ENCODE measurements at regions of chr16 and their contacts with region 1.

Region 1: DNA sequence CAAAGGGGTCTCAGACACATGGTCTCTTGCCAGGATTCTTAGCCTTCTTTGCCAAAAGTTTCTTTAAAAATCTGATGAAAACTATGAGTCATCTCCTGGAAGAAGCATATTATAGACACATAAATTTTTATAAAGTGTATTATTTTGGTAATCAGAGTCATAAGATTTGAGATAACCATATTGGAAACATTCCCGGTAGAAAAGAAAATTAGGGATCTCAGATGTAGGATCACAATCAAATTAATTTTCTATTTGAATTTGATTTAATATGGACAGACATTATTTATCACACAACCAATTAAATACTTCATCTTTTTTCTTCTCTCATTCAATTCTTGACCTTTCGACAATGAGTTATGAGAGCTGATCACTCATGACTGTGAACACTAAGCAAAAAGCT is 347.7 kb upstream of the CDH8 start:
- DNase-seq: no peak
- H3K27ac ChIP-seq: no peak overlapping the region
- CTCF ChIP-seq: no peak

Region 2: GRCh38 chr16:62363501-62363900 is 20.4 kb before region 1 on chr16:
- CTCF ChIA-PET with region 1: no interaction called
- POLR2A ChIA-PET with region 1: no interaction called
- DNase-seq: no peak
- H3K27ac ChIP-seq: no peak overlapping the region
- CTCF ChIP-seq: no peak

Region 3: GRCh38 chr16:62638964-62639870 is 255.3 kb after region 1 on chr16:
- CTCF ChIA-PET with region 1: no interaction called
- POLR2A ChIA-PET with region 1: no interaction called
- DNase-seq: no peak
- H3K27ac ChIP-seq: no peak overlapping the region
- CTCF ChIP-seq: no peak

Region 4: DNA sequence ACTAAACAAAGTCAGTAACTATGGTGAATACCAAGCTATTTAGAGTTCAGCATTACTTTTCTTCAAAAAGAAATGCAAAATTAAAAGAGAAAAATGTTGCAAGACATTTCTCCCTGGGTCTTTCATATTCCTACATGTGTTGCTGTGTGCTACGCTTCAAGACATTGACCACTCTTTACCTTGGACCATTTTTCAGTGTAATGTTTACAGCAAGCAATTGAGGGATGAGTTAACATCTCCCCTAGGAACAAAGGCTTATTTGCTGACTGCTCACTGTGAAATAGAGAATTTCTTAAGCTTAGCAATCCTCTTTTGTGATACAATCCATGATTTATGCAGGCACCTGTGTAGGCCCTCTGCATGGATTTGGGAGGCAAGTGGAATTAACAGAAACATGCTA is 855.1 kb after region 1 on chr16:
- CTCF ChIA-PET with region 1: interaction called, 12 read pairs
- POLR2A ChIA-PET with region 1: no interaction called
- DNase-seq: no peak
- H3K27ac ChIP-seq: no peak overlapping the region
- CTCF ChIP-seq: no peak